CD4-positive, alpha-beta memory T cell (primary cell): ENCODE measurements at regions of chr17 and their contacts with region 1.

Region 1: DNA sequence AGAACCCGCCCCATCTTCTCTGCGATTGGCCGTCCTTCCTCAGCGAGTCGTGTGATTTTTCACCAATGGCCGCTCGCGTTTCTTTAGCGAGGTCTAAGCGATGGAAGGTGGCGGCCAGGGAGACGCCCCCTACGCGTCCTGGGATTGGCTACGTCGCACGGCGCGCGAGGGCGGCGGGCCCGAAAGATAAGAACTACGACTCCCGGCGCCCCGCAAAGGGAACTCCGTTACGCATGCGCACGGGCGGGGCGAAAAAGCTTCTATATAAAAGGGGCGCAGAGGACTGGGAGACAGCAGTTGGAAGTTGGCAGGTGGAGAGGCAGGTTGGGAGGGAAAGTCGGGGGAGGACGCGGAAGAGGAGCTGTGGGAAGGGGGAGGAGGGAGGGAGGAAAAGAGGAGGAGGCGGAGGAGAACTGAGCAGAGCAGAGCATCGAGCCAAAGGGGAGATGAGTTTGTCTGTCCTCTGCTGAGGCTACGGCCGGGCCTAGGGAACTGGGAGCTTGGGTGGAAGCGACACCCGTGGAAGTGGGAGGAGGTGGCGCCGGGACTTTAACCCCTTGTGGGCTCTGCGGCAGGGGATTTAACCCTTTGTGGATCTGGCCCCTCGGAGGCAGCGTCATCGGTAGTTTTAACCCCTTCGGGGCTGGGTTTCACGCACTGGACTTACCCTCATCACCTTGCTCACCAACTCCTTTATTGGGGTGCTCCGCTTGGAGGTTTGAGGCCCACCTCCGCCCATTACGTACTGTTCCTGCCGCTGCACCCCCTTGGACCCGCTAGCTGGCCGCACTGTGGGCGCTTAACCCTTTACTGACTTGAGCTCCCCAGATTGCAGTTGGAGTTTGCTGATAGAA is at the start of gene HEXIM1:
- DNase-seq: peak; percentile 99 to 100 (median 99)
- H3K4me3 ChIP-seq: peak within 1 kb of the TSS; percentile 90 to 95
- H3K4me3 Mint-ChIP-seq: peak within 1 kb of the TSS; percentile 93 to 99 (median 96)
- H3K27ac ChIP-seq: peak within 1 kb of the TSS; percentile 88
- H3K27ac Mint-ChIP-seq: peak within 1 kb of the TSS; percentile 98 to 100 (median 100)
- H3K4me1 ChIP-seq: peaks cover 59% of the 10 kb centered on the region
- H3K4me1 Mint-ChIP-seq: peaks cover 26 to 61% (median 44%) of the 10 kb centered on the region in 4 donors
- H3K27me3 ChIP-seq: no peaks in the 10 kb centered on the region
- H3K27me3 Mint-ChIP-seq: peaks cover 1 to 5% of the 10 kb centered on the region in 2 donors
- total RNA-seq, gene HEXIM1: 28.8 to 30.8 TPM

Region 2: DNA sequence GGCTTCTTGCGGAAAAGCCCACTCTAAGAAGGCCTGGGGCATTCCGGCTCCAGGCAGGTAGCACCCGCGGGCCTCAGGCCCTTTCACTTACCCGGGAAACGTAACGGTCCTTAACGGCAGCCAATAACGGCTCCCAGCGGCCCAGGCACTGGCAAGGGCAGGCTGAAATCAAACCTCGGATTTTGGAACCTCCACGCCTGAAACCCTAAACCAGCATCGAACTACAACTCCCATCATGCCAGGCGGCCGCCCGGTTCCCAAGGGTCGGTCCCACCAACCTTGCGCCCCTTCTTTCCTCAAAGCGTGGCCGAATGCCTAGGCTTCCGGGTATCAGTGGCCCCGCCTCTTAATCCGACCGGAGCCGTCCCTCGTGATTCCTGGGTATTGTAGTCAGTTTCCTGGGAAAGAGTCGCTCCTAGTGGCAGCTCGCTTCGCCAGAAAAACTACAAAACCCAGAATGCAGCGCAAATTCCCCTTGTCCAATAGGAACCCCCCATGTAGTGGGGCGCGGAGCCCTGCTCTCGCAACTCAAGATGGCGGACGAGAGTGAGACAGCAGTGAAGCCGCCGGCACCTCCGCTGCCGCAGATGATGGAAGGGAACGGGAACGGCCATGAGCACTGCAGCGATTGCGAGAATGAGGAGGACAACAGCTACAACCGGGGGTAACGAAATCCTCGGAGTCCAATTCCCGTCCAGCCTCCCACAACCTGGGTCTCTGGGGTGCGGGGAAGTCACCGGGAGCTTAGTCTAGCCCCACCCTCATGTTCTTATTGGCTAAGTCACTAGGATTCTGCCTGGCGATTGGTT is 87.4 kb before region 1 on chr17 and contains the start of gene NMT1:
- CTCF ChIA-PET with region 1: interaction called, 6 read pairs
- POLR2A ChIA-PET with region 1: interaction called, 32 read pairs
- intact Hi-C with region 1: loop called (anchors 2 kb)
- DNase-seq: peak; percentile 98 to 99 (median 98)
- H3K4me3 ChIP-seq: peak within 1 kb of the TSS; percentile 80 to 100
- H3K4me3 Mint-ChIP-seq: peak within 1 kb of the TSS; percentile 96 to 100 (median 100)
- H3K27ac ChIP-seq: peak within 1 kb of the TSS; percentile 88
- H3K27ac Mint-ChIP-seq: peak within 1 kb of the TSS; percentile 91 to 100 (median 98)
- H3K4me1 ChIP-seq: peaks cover 42% of the 10 kb centered on the region
- H3K4me1 Mint-ChIP-seq: peaks cover 20 to 64% (median 46%) of the 10 kb centered on the region in 4 donors
- H3K27me3 ChIP-seq: no peaks in the 10 kb centered on the region
- H3K27me3 Mint-ChIP-seq: no peaks in the 10 kb centered on the region
- total RNA-seq, gene NMT1: 125 to 126 TPM

Region 3: DNA sequence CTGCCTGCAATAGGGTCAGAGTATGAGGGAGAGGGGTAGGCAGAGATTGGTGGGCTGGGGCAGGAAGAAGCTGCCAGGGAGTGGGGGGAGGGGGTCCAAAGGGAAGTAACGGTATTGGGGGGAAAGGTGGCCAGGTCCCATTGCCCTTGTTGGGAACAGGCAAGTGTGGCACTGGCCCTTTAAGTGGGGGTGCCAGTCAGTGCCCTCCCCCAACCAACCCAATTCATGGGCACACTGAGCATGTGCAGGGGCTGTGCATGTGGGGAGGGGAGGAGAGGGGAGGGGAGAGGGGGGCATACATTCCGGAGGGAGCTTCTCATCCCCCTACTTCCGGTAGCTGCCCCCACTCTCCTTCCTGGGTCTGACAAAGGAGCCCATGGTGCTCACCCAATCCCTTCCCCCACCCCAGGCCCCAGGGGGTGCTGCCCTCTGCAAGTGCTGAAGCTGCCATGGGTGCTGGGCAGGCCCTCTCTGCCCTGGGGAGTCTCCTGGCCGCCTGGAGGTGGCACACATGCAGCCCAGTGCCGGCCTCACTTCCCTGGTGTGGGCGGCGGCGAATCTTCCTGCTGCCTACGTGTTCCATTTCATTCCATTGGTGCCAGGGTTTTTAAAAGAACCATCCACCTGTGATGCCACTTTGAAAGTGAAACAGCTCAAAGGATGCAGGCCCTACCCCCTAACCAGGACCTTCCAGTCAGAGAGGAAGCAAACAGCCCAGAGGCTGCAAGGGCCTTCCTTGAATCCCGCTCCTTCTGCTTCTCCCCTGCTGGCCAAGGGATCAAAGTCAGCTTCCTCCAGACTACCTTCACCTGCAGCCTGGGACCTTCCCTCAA is 24.3 kb after region 1 on chr17:
- CTCF ChIA-PET with region 1: interaction called, 13 read pairs
- POLR2A ChIA-PET with region 1: interaction called, 865 read pairs
- intact Hi-C with region 1: loop called (anchors 2 kb)
- DNase-seq: peak; percentile 21 to 44 (median 35)
- H3K4me3 ChIP-seq: peak overlapping the region; percentile 11 to 46
- H3K4me3 Mint-ChIP-seq: peak overlapping the region; percentile 69 to 87 (median 79)
- H3K27ac ChIP-seq: peak overlapping the region; percentile 17
- H3K27ac Mint-ChIP-seq: peak overlapping the region; percentile 43 to 91 (median 87)
- H3K4me1 ChIP-seq: peaks cover 16% of the 10 kb centered on the region
- H3K4me1 Mint-ChIP-seq: peaks cover 5 to 17% (median 12%) of the 10 kb centered on the region in 4 donors
- H3K27me3 ChIP-seq: no peaks in the 10 kb centered on the region
- H3K27me3 Mint-ChIP-seq: no peaks in the 10 kb centered on the region

Region 4: GRCh38 chr17:45256114-45256966 is 107.9 kb after region 1 on chr17:
- CTCF ChIA-PET with region 1: no interaction called
- POLR2A ChIA-PET with region 1: interaction called, 12 read pairs
- intact Hi-C with region 1: no loop called
- DNase-seq: no peak
- H3K4me3 ChIP-seq: no peak overlapping the region
- H3K4me3 Mint-ChIP-seq: peak overlapping the region in 4 of 8 donors; percentile 7 to 57 (median 28)
- H3K27ac ChIP-seq: no peak overlapping the region
- H3K27ac Mint-ChIP-seq: peak overlapping the region; percentile 16 to 81 (median 57)
- H3K4me1 ChIP-seq: peaks cover 36% of the 10 kb centered on the region
- H3K4me1 Mint-ChIP-seq: peaks cover 27 to 71% (median 44%) of the 10 kb centered on the region in 4 donors
- H3K27me3 ChIP-seq: no peaks in the 10 kb centered on the region
- H3K27me3 Mint-ChIP-seq: no peaks in the 10 kb centered on the region